Activated T-helper 1 cell treated with anti-CD3 and anti-CD28 coated beads, Interleukin-12 subunit alpha, Interleukin-12 subunit beta, Interleukin-2, Interleukin-4 antibody, amounts not matched to agents 30 ng/mL and 10 ng/mL and 1 ng/mL, durations not matched to agents 14 hours and 24 hours and 36 hours (primary cell): ENCODE measurements at regions of chr1 and their contacts with region 1.

Region 1: DNA sequence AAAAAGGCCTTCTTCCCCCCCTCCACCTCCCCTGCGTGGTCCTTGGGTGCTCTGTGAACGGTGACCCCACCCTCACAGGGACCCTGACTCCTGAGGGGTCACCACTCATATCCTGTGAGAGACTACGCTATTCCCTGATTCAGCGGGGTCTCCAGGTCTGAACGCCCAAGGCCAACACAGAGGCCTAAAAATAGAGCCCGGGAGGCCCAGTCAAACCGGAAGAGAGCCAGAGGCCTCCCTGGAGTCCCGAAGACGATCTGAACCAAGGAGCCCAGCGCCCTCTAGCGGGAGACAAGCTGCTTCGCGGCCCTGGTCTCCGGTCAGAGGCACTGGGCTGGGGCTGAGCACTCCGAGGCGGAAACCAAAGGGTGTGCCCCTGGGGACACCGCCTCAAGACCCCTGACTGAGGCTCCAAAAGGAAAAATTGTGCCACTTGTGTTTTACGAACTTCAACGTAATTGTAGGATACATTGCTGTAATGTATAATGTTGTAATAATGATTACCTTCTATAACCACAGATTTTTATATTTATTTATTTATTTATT is 42.4 kb upstream of the PSEN2 start:
- DNase-seq: peak; percentile 91
- H3K4me3 Mint-ChIP-seq: no peak overlapping the region
- H3K27ac Mint-ChIP-seq: peak overlapping the region; percentile 89
- H3K4me1 Mint-ChIP-seq: peaks cover 32% of the 10 kb centered on the region
- H3K27me3 Mint-ChIP-seq: peaks cover 5% of the 10 kb centered on the region

Region 2: GRCh38 chr1:226634166-226634588 is 193.9 kb before region 1 on chr1:
- intact Hi-C with region 1: loop called (anchors 1 kb)
- DNase-seq: peak; percentile 66
- H3K4me3 Mint-ChIP-seq: no peak overlapping the region
- H3K27ac Mint-ChIP-seq: peak overlapping the region; percentile 31
- H3K4me1 Mint-ChIP-seq: peaks cover 34% of the 10 kb centered on the region
- H3K27me3 Mint-ChIP-seq: no peaks in the 10 kb centered on the region

Region 3: GRCh38 chr1:226708342-226708780 is 119.7 kb before region 1 on chr1:
- intact Hi-C with region 1: loop called (anchors 1 kb)
- DNase-seq: no peak
- H3K4me3 Mint-ChIP-seq: peak overlapping the region; percentile 59
- H3K27ac Mint-ChIP-seq: peak overlapping the region; percentile 94
- H3K4me1 Mint-ChIP-seq: peaks cover 72% of the 10 kb centered on the region
- H3K27me3 Mint-ChIP-seq: peaks cover 1% of the 10 kb centered on the region

Region 4: GRCh38 chr1:226882631-226883409 is 54.8 kb after region 1 on chr1:
- intact Hi-C with region 1: loop called (anchors 1 kb)
- DNase-seq: peak; percentile 40
- H3K4me3 Mint-ChIP-seq: peak overlapping the region; percentile 48
- H3K27ac Mint-ChIP-seq: peak overlapping the region; percentile 87
- H3K4me1 Mint-ChIP-seq: peaks cover 60% of the 10 kb centered on the region
- H3K27me3 Mint-ChIP-seq: no peaks in the 10 kb centered on the region